Left ventricle myocardium superior (tissue), 1 donor: ENCODE measurements at regions of chr11 and their contacts with region 1.

Region 1: DNA sequence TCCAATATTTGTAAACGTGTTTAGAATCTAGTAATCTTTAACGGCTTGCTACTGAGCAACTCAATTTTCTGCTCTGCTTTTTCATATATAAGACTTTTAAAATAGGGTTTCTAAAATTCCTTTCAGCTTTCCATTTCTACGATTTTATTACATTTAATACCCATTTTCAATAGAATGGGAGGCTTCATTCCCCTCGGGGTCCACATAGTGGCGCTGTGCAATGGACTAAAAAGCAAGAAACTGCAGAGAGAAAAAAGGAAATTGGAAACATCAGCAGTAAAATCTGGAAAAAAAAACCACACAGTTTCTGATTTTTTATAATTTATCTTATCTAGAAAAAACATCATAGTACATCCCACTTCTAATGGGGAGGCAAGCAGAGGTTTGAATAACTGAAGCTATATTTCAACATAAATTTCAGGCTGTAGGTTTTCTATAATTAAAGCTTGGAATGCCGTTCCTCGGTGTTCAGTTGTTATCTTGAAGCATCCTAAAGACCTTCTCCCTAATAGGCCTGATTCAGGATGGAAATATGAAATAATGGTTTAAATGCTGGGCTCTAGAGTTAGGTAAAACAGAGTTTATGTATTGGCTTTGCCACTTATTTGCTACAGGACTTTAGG is 18.7 kb upstream of the JHY start:
- DNase-seq: peak; percentile 33
- ATAC-seq: no peak

Region 2: DNA sequence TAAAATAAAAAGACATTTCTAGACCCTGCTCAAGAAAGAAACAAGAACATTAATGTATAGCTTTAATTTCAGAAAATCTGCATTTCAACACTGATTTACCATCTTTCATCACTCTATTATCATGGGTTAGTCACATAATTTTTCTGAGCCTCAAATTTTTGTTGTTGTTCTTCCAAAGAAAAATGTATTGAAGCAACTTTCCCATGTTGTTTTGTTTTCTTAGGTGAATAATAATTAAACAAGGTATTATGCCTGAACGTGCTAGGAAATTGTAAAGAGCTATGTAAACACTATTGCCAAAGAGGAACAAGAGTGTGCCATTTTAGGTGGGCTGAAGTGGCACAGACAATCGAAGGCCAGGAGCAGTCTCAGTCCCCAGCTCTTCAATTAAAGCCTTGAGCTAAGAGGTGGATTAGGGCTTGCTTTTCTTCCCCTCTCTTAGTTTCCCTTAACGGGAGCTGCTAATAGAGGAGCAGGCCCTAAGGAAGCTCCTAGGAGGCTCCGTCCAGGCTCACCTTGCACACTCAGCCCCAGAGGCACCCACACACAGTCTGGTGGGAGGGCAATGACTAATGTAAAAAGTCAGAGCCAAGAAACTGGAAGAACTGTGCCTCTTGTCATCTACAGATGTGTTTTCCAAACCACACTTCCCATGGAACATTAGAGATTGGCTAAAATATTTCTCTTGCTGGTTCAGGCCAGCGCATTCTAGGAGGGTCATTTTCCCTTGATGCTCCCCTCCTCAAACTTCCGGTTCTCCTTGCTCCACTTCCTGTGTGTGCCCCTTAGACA is 217.1 kb before region 1 on chr11:
- intact Hi-C with region 1: no loop called
- DNase-seq: no peak
- ATAC-seq: no peak

Region 3: DNA sequence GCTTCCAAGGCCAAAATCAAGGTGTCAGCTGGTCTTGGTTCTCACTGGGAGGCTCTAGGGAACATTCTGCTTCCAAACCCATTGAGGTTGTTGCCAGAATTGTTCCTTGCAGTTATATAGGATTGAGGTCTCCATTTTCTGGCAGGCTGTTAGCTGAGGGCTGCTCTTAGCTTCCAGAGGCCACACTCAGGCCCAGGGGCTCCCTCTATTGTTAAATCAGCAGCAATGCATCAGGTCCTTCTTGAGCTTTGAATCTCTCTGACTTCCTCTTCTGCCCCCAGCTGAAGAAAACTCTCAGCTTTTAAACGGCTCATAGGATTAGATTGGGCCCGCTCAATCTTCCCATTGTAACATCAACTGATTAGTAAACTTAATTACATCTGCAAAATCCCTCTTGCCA is 157.2 kb after region 1 on chr11:
- intact Hi-C with region 1: loop called (anchors 10 kb)
- DNase-seq: no peak
- ATAC-seq: peak; percentile 47

Region 4: GRCh38 chr11:123054301-123055065 is 190.7 kb after region 1 on chr11:
- intact Hi-C with region 1: loop called (anchors 10 kb)
- DNase-seq: no peak
- ATAC-seq: peak; percentile 86